ENCODE measurements at regions of chr3 and their contacts with region 1.

Region 1: GRCh38 chr3:171284308-171285075 is 175.7 kb downstream of the TNIK start:
- DNase-seq: peak; percentile 55
- H3K4me3 Mint-ChIP-seq: peak overlapping the region; percentile 22
- H3K27ac Mint-ChIP-seq: peak overlapping the region; percentile 76
- H3K4me1 Mint-ChIP-seq: peaks cover 66% of the 10 kb centered on the region
- H3K27me3 Mint-ChIP-seq: no peaks in the 10 kb centered on the region

Region 2: GRCh38 chr3:171178714-171179113 is 105.8 kb before region 1 on chr3:
- CTCF ChIA-PET with region 1: no interaction called
- intact Hi-C with region 1: loop called (anchors 2 kb)
- DNase-seq: peak; percentile 25
- H3K4me3 Mint-ChIP-seq: no peak overlapping the region
- H3K27ac Mint-ChIP-seq: peak overlapping the region; percentile 74
- H3K4me1 Mint-ChIP-seq: peaks cover 40% of the 10 kb centered on the region
- H3K27me3 Mint-ChIP-seq: no peaks in the 10 kb centered on the region

Region 3: GRCh38 chr3:171187706-171188290 is 96.7 kb before region 1 on chr3:
- CTCF ChIA-PET with region 1: interaction called, 3 read pairs
- intact Hi-C with region 1: loop called (anchors 1 kb)
- DNase-seq: peak; percentile 35
- H3K4me3 Mint-ChIP-seq: no peak overlapping the region
- H3K27ac Mint-ChIP-seq: no peak overlapping the region
- H3K4me1 Mint-ChIP-seq: peaks cover 49% of the 10 kb centered on the region
- H3K27me3 Mint-ChIP-seq: no peaks in the 10 kb centered on the region

Region 4: DNA sequence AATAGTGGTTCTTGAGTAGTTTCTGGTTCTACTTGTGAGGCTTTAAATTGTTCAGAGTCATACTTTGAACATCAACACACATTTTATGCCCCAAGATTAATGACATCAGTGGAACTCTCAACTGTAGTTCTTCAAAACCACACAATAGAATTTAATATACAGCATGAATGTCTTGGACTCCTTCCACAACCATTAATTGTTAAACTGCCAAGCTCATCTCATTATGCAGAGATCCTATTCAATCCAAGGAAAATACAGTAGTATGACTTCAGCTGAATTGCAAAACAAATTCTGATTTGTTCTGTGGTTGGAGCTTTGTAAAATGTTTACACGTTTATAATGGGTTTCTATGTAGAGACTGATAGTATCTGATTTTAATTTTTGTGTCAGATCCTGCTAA is 58.8 kb before region 1 on chr3:
- CTCF ChIA-PET with region 1: no interaction called
- intact Hi-C with region 1: loop called (anchors 2 kb)
- DNase-seq: no peak
- H3K4me3 Mint-ChIP-seq: no peak overlapping the region
- H3K27ac Mint-ChIP-seq: peak overlapping the region; percentile 56
- H3K4me1 Mint-ChIP-seq: peaks cover 50% of the 10 kb centered on the region
- H3K27me3 Mint-ChIP-seq: no peaks in the 10 kb centered on the region

Region 5: GRCh38 chr3:171239757-171240503 is 44.6 kb before region 1 on chr3:
- CTCF ChIA-PET with region 1: no interaction called
- intact Hi-C with region 1: no loop called
- DNase-seq: no peak
- H3K4me3 Mint-ChIP-seq: no peak overlapping the region
- H3K27ac Mint-ChIP-seq: no peak overlapping the region
- H3K4me1 Mint-ChIP-seq: peaks cover 19% of the 10 kb centered on the region
- H3K27me3 Mint-ChIP-seq: no peaks in the 10 kb centered on the region

Region 6: DNA sequence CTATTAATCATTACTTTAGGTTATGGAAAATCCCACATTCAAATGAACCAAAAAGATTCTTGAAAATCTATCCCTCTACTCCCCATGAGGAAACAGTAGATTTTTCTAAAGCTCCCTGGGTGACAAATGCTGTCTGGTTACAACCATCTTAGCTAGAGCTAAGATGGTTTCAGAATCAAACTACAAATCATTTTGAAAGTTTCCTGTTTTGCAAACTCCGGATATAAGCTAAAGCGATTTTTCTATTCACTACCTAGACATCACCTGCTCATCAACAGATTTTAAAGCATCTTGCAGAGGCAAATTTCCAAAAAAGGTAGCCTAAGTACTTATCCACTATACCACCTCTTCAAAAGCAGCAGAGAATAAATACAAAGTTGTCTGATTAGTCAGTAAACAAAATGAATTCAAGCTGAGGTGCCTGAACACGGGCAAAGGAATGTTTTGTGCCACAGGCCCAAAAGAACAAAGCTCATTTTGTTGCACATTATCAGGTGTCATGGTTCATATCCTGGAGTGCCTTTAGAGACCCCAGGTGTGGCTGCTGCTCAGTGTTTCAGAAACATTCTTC is 29.2 kb before region 1 on chr3:
- CTCF ChIA-PET with region 1: no interaction called
- intact Hi-C with region 1: loop called (anchors 1 kb)
- DNase-seq: no peak
- H3K4me3 Mint-ChIP-seq: no peak overlapping the region
- H3K27ac Mint-ChIP-seq: peak overlapping the region; percentile 78
- H3K4me1 Mint-ChIP-seq: peaks cover 86% of the 10 kb centered on the region
- H3K27me3 Mint-ChIP-seq: no peaks in the 10 kb centered on the region

Region 7: GRCh38 chr3:171269542-171269941 is 14.9 kb before region 1 on chr3:
- CTCF ChIA-PET with region 1: interaction called, 28 read pairs
- intact Hi-C with region 1: loop called (anchors 1 kb)
- DNase-seq: no peak
- H3K4me3 Mint-ChIP-seq: peak overlapping the region; percentile 25
- H3K27ac Mint-ChIP-seq: peak overlapping the region; percentile 50
- H3K4me1 Mint-ChIP-seq: peaks cover 84% of the 10 kb centered on the region
- H3K27me3 Mint-ChIP-seq: no peaks in the 10 kb centered on the region